ENCODE measurements at regions of chr14 and their contacts with region 1.

Region 1: DNA sequence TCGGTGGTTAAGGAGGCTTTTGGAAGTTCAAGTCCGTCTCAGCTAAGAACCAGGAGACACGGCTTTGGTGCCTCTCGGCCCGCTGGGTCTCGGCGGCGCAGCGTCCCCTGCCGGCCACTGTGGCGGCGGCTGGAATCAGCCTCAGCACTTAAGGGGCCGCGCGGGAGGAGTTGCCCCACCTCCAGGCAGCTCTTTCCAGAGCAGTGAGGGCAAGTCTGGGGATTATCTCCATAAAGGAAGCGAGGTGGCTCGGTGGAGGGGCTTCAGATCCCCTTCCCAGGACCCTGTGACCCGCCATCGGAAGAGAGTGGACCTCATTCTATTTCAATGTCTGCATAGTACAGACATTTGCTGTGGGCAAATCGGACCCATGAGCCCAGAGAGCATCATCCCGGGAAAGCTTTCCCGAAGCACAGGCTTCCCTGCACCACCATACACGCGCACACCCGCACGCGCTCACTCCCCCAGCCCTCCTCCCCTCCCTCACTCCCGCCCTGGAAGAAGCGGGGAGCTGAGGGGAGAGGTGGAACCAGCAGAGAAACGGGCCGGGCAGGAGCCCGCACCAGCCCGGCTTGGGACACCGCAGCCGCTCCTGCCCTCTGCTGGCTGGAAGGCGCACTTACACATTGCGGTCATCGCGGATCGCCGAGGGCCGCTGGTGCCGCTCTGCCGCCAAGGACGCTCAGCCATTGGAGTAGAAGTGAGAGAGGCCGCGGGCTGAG is 15.9 kb downstream of the RNASE2 start:
- DNase-seq: peak; percentile 82
- H3K4me3 Mint-ChIP-seq: peak overlapping the region; percentile 83
- H3K27ac Mint-ChIP-seq: no peak overlapping the region
- H3K4me1 Mint-ChIP-seq: peaks cover 6% of the 10 kb centered on the region
- H3K27me3 Mint-ChIP-seq: peaks cover 17% of the 10 kb centered on the region

Region 2: DNA sequence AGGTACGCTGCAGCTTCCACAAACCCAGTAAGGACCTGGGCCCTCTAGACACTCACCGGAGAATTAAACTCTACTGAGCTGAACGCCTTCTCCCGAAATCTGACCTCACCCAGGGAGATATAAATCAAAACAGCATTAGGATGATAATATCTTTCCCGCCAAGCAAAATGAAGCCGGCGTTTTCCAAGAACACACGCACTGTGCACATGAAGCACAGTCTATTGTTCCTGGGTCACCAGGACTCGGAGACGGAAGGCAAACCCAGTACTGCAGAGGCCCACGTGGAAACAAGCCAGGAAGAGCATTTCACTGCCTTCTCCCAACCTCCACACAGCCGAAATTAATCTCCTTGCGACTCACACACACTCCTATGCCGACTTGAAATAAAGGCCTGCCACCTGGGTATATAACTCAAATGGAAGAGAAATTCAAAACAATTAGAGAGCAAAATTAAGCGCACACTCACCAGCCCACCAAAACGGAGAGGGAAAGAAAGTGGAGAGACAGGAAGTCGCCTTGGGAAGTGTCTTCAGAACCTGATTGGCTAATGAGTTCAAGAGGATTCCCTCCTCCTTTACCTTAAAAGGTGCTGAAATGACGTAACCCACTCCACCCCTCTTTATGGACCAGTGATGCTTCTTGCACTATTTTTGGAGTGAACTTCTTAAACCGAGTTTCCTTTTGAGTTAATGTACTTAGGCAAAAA is 638.2 kb before region 1 on chr14 and contains the start of gene CCNB1IP1:
- CTCF ChIA-PET with region 1: no interaction called
- intact Hi-C with region 1: loop called (anchors 2 kb)
- DNase-seq: peak; percentile 71
- H3K4me3 Mint-ChIP-seq: peak within 1 kb of the TSS; percentile 90
- H3K27ac Mint-ChIP-seq: peak within 1 kb of the TSS; percentile 92
- H3K4me1 Mint-ChIP-seq: peaks cover 38% of the 10 kb centered on the region
- H3K27me3 Mint-ChIP-seq: no peaks in the 10 kb centered on the region
- total RNA-seq, gene CCNB1IP1: 93.4 to 98.6 TPM

Region 3: DNA sequence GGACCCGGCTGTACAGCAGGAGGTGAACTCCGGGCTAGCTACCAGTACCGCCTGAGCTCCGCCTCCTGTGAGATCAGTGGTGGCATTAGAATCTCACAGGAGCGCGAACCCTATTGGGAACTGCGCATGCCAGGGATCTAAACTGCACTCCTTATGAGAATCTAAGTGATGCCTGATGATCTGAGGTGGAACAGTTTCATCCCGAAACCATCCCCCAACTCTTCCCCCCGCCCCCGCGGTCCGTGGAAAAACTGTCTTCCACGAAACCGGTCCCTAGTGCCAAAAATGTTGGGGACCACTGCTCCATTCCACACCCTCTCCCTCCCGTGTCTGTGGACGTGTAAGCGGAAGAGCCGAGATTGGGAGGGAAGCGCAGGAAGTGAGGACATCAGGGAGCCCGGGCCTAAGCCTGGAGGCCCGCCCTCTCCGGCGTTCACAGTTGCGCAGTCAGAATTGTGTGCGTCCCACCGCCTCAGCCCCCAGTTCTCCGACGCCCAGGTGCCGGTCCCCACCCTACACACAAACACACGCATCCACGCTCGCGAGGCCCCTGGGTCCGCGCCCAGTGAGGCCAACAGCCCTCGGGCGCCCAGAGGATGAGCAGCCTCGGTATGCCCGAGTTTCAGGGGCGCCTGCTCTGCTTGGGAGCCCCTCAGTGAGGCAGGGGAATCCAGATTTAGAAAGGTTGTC is 288.6 kb before region 1 on chr14:
- CTCF ChIA-PET with region 1: interaction called, 3 read pairs
- intact Hi-C with region 1: loop called (anchors 1 kb)
- DNase-seq: peak; percentile 81
- H3K4me3 Mint-ChIP-seq: no peak overlapping the region
- H3K27ac Mint-ChIP-seq: no peak overlapping the region
- H3K4me1 Mint-ChIP-seq: peaks cover 22% of the 10 kb centered on the region
- H3K27me3 Mint-ChIP-seq: no peaks in the 10 kb centered on the region

Region 4: GRCh38 chr14:20782280-20782890 is 188.8 kb before region 1 on chr14:
- CTCF ChIA-PET with region 1: interaction called, 11 read pairs
- intact Hi-C with region 1: loop called (anchors 1 kb)
- DNase-seq: peak; percentile 52
- H3K4me3 Mint-ChIP-seq: peak overlapping the region; percentile 63
- H3K27ac Mint-ChIP-seq: peak overlapping the region; percentile 46
- H3K4me1 Mint-ChIP-seq: peaks cover 22% of the 10 kb centered on the region
- H3K27me3 Mint-ChIP-seq: no peaks in the 10 kb centered on the region

Region 5: GRCh38 chr14:20873370-20874177 is 97.6 kb before region 1 on chr14:
- CTCF ChIA-PET with region 1: interaction called, 13 read pairs
- intact Hi-C with region 1: loop called (anchors 1 kb)
- DNase-seq: peak; percentile 93
- H3K4me3 Mint-ChIP-seq: peak overlapping the region; percentile 34
- H3K27ac Mint-ChIP-seq: no peak overlapping the region
- H3K4me1 Mint-ChIP-seq: peaks cover 10% of the 10 kb centered on the region
- H3K27me3 Mint-ChIP-seq: peaks cover 6% of the 10 kb centered on the region

Region 6: DNA sequence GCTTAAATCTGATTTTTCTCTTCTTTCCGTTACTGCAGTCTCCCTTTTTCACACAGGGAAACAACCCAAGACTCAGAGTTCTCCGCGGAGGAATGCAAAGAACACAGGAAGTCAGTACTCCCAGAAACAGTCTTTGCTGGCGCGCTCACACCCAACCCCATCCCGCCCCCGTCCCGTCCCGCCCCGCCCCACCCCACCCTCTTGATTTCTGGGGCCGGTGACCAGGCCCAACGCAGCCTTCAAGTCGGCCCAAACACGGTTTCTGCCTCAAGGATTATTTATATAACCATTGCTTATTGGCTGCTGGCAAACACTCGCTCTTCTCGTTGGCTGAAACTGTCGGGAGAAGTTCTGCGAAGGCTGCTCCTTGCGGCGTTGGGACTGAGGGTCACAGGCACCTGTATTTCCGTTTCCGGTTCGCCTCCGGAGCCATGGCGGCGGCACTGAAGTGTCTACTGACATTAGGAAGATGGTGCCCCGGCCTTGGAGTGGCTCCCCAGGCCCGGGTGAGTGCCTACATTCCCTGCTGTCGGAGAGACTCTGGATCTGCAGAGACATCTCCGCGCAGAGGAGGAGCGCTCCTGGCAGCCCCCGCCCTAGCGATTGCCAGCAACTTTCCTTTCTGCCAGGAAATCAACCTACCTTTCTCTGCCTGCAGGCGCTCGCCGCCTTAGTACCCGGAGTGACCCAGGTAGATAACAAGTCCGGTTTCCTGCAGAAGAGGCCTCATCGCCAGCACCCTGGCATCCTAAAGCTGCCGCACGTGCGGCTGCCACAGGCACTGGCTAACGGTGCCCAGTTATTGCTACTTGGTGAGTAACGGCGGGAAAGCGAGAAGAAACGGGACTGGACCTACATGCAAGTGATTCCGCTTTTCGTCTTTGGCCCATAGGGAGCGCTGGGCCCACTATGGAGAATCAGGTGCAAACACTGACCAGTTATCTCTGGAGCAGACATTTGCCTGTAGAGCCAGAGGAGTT is 18.7 kb after region 1 on chr14 and contains the start of gene METTL17:
- CTCF ChIA-PET with region 1: interaction called, 14 read pairs
- intact Hi-C with region 1: loop called (anchors 1 kb)
- DNase-seq: peak; percentile 94
- H3K4me3 Mint-ChIP-seq: peak within 1 kb of the TSS; percentile 86
- H3K27ac Mint-ChIP-seq: peak within 1 kb of the TSS; percentile 86
- H3K4me1 Mint-ChIP-seq: peaks cover 19% of the 10 kb centered on the region
- H3K27me3 Mint-ChIP-seq: no peaks in the 10 kb centered on the region
- total RNA-seq, gene METTL17: 90.9 to 97.5 TPM

Region 7: DNA sequence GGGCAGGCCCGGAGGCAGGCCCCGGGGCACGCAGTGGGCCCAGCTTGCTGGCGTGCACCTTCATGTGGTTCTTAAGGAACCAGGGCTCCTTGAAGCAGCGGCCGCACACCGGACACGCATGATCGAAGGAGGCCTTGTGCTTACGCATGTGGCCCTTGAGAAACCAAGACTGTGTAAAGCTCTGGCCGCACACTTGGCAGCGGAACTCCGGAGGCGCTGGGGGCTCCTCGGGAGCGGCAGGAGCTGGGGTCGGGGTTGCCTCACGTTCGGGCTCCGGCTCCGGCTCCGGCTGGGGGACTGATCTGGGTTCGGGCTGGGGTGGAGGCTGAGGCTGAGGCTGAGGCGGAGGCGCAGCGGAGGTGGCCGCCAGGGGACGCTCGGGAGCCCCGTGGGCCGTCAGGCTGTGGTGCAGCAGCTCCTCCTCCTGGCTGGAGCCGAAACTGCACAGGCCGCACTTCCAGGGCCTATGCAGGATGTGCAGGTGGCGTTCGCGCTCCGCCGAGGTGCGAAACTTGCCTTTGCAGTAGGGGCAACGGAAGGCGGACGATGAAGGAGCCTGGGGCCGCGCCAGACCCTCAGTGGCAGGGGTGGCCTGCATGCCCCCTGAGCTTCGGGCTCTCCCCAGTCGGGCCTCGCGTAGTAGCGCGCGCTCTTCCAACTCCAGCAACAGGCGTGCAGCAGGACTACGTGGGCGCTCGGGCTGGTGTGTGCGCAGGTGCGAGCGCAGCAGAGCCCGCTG is 121.3 kb after region 1 on chr14:
- CTCF ChIA-PET with region 1: interaction called, 14 read pairs
- intact Hi-C with region 1: no loop called
- DNase-seq: peak; percentile 93
- H3K4me3 Mint-ChIP-seq: no peak overlapping the region
- H3K27ac Mint-ChIP-seq: no peak overlapping the region
- H3K4me1 Mint-ChIP-seq: peaks cover 13% of the 10 kb centered on the region
- H3K27me3 Mint-ChIP-seq: no peaks in the 10 kb centered on the region

Region 8: GRCh38 chr14:22929104-22929847 is 1958.1 kb after region 1 on chr14 and contains the start of gene PRMT5:
- CTCF ChIA-PET with region 1: no interaction called
- intact Hi-C with region 1: no loop called
- DNase-seq: peak; percentile 99
- H3K4me3 Mint-ChIP-seq: no peak within 1 kb of the TSS
- H3K27ac Mint-ChIP-seq: no peak within 1 kb of the TSS
- H3K4me1 Mint-ChIP-seq: peaks cover 34% of the 10 kb centered on the region
- H3K27me3 Mint-ChIP-seq: no peaks in the 10 kb centered on the region
- total RNA-seq, gene PRMT5: 81.0 to 92.8 TPM

Measured in activated naive CD4-positive, alpha-beta T cell treated with anti-CD3 and anti-CD28 coated beads for 36 hours (primary cell).